ENCODE measurements at regions of chr1 and their contacts with region 1.

Region 1: GRCh38 chr1:219566951-219567947 is 45.7 kb downstream of the ZC3H11B start:
- DNase-seq: peak; percentile 87
- ATAC-seq: peak; percentile 69
- H3K4me3 ChIP-seq: no peak overlapping the region
- H3K27ac ChIP-seq: peak overlapping the region; percentile 34
- H3K4me1 ChIP-seq: peaks cover 29% of the 10 kb centered on the region
- H3K27me3 ChIP-seq: no peaks in the 10 kb centered on the region
- CTCF ChIP-seq: peak; percentile 99

Region 2: GRCh38 chr1:218330043-218330623 is 1237.1 kb before region 1 on chr1:
- CTCF ChIA-PET with region 1: no interaction called
- POLR2A ChIA-PET with region 1: no interaction called
- intact Hi-C with region 1: loop called (anchors 2 kb)
- DNase-seq: peak; percentile 81
- ATAC-seq: peak; percentile 75
- H3K4me3 ChIP-seq: no peak overlapping the region
- H3K27ac ChIP-seq: no peak overlapping the region
- H3K4me1 ChIP-seq: peaks cover 10% of the 10 kb centered on the region; the same call in 1 of the 2 replicates
- H3K27me3 ChIP-seq: no peaks in the 10 kb centered on the region
- CTCF ChIP-seq: peak; percentile 99

Region 3: GRCh38 chr1:218557731-218558130 is 1009.5 kb before region 1 on chr1:
- CTCF ChIA-PET with region 1: no interaction called
- POLR2A ChIA-PET with region 1: no interaction called
- intact Hi-C with region 1: loop called (anchors 10 kb)
- DNase-seq: peak; percentile 93
- ATAC-seq: peak; percentile 83
- H3K4me3 ChIP-seq: no peak overlapping the region
- H3K27ac ChIP-seq: no peak overlapping the region
- H3K4me1 ChIP-seq: peaks cover 11% of the 10 kb centered on the region
- H3K27me3 ChIP-seq: no peaks in the 10 kb centered on the region
- CTCF ChIP-seq: no peak

Region 4: GRCh38 chr1:219209578-219209977 is 357.7 kb before region 1 on chr1:
- CTCF ChIA-PET with region 1: interaction called, 6 read pairs
- POLR2A ChIA-PET with region 1: no interaction called
- intact Hi-C with region 1: loop called (anchors 1 kb)
- DNase-seq: peak; percentile 23
- ATAC-seq: peak; percentile 48
- H3K4me3 ChIP-seq: no peak overlapping the region
- H3K27ac ChIP-seq: peak overlapping the region; percentile 3
- H3K4me1 ChIP-seq: peaks cover 16% of the 10 kb centered on the region
- H3K27me3 ChIP-seq: no peaks in the 10 kb centered on the region
- CTCF ChIP-seq: no peak

Region 5: DNA sequence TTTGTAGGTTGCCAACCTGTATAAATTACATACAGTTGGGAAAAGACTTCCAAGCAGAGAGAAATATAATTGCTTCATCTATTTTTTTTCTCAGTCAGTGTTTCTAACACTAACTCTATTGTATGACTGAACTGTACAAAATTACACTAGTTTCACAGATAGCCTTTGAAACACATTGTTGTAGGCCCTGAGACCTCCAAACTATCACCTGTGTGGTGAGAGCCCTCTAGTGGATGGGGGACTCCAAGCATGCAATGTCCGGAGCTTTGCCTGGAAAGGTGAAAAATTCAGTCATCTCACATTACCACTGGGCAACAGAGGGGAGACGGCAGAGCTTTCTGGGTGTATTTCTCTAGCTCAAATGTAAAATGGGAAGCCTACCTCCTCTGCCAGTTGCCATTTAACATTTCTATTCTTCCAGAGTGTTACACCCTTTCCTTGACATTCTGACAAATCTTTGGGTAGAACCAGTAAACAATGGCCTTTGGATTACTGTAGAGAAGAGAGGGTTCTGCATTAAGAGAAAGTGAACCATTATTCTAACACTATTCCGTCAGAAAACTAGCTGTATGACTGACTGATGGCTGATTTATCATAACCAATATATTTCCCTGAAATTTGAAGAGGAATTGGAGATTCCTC is 181.3 kb before region 1 on chr1:
- CTCF ChIA-PET with region 1: interaction called, 7 read pairs
- POLR2A ChIA-PET with region 1: no interaction called
- intact Hi-C with region 1: loop called (anchors 1 kb)
- DNase-seq: peak; percentile 96
- ATAC-seq: peak; percentile 98
- H3K4me3 ChIP-seq: no peak overlapping the region
- H3K27ac ChIP-seq: no peak overlapping the region
- H3K4me1 ChIP-seq: peaks cover 4% of the 10 kb centered on the region; the same call in 1 of the 2 replicates
- H3K27me3 ChIP-seq: no peaks in the 10 kb centered on the region
- CTCF ChIP-seq: peak; percentile 99

Region 6: GRCh38 chr1:219587805-219588561 is 20.7 kb after region 1 on chr1:
- CTCF ChIA-PET with region 1: no interaction called
- POLR2A ChIA-PET with region 1: no interaction called
- intact Hi-C with region 1: no loop called
- DNase-seq: no peak
- ATAC-seq: no peak
- H3K4me3 ChIP-seq: no peak overlapping the region
- H3K27ac ChIP-seq: no peak overlapping the region
- H3K4me1 ChIP-seq: peaks cover under 1% of the 10 kb centered on the region; the same call in 1 of the 2 replicates
- H3K27me3 ChIP-seq: no peaks in the 10 kb centered on the region
- CTCF ChIP-seq: no peak

Measured in PC-3 (cell line).